Activated naive CD4-positive, alpha-beta T cell treated with anti-CD3 and anti-CD28 coated beads for 36 hours (primary cell): ENCODE measurements at regions of chr3 and their contacts with region 1.

Region 1: GRCh38 chr3:37974121-37975083 is 16.2 kb upstream of the VILL start:
- DNase-seq: peak; percentile 84
- H3K4me3 Mint-ChIP-seq: no peak overlapping the region
- H3K27ac Mint-ChIP-seq: no peak overlapping the region
- H3K4me1 Mint-ChIP-seq: peaks cover 4% of the 10 kb centered on the region
- H3K27me3 Mint-ChIP-seq: no peaks in the 10 kb centered on the region

Region 2: GRCh38 chr3:37986479-37987314 is 12.3 kb after region 1 on chr3:
- CTCF ChIA-PET with region 1: interaction called, 22 read pairs
- intact Hi-C with region 1: no loop called
- DNase-seq: no peak
- H3K4me3 Mint-ChIP-seq: no peak overlapping the region
- H3K27ac Mint-ChIP-seq: no peak overlapping the region
- H3K4me1 Mint-ChIP-seq: no peaks in the 10 kb centered on the region
- H3K27me3 Mint-ChIP-seq: no peaks in the 10 kb centered on the region

Region 3: GRCh38 chr3:38004415-38005076 is 30.1 kb after region 1 on chr3:
- CTCF ChIA-PET with region 1: interaction called, 35 read pairs
- intact Hi-C with region 1: loop called (anchors 1 kb)
- DNase-seq: peak; percentile 74
- H3K4me3 Mint-ChIP-seq: no peak overlapping the region
- H3K27ac Mint-ChIP-seq: peak overlapping the region; percentile 63
- H3K4me1 Mint-ChIP-seq: peaks cover 11% of the 10 kb centered on the region
- H3K27me3 Mint-ChIP-seq: no peaks in the 10 kb centered on the region

Region 4: GRCh38 chr3:38117748-38118420 is 143.5 kb after region 1 on chr3:
- CTCF ChIA-PET with region 1: interaction called, 13 read pairs
- intact Hi-C with region 1: loop called (anchors 1 kb)
- DNase-seq: peak; percentile 88
- H3K4me3 Mint-ChIP-seq: no peak overlapping the region
- H3K27ac Mint-ChIP-seq: no peak overlapping the region
- H3K4me1 Mint-ChIP-seq: peaks cover 4% of the 10 kb centered on the region
- H3K27me3 Mint-ChIP-seq: no peaks in the 10 kb centered on the region

Region 5: DNA sequence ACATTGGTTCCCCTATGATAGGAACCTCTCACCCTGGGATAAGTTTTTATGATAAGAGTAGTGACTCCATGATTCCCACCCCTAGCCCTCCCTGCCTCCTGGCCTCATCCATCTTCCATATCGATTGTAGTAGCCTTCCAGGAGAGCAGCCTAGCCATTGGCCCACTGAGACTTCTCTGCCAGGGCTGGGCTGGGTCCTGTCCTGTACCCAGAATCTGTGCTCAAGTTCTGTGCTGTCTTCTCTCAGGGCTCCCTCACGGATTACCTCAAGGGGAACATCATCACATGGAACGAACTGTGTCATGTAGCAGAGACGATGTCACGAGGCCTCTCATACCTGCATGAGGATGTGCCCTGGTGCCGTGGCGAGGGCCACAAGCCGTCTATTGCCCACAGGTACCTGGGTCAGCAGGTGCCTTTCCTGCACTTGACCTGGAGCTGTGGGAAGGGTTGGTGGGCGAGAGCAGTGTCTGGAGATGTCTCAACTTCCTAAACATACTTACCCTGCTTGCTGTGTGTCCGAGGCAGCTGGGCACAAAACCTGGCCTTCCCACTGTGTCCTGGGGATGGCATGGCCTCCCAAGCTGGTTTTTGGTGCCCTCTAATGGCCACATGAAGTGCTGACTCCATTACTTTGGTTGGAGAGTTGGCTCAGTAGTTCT is 505.2 kb after region 1 on chr3:
- CTCF ChIA-PET with region 1: interaction called, 3 read pairs
- intact Hi-C with region 1: loop called (anchors 1 kb)
- DNase-seq: peak; percentile 63
- H3K4me3 Mint-ChIP-seq: no peak overlapping the region
- H3K27ac Mint-ChIP-seq: no peak overlapping the region
- H3K4me1 Mint-ChIP-seq: no peaks in the 10 kb centered on the region
- H3K27me3 Mint-ChIP-seq: no peaks in the 10 kb centered on the region